ENCODE measurements at regions of chr4 and their contacts with region 1.

Region 1: GRCh38 chr4:56655209-56655626 is 25.9 kb downstream of the HOPX start:
- DNase-seq: peak; percentile 64
- H3K4me3 Mint-ChIP-seq: peak overlapping the region; percentile 95
- H3K27ac Mint-ChIP-seq: peak overlapping the region; percentile 88
- H3K4me1 Mint-ChIP-seq: peaks cover 59% of the 10 kb centered on the region
- H3K27me3 Mint-ChIP-seq: peaks cover 29% of the 10 kb centered on the region

Region 2: DNA sequence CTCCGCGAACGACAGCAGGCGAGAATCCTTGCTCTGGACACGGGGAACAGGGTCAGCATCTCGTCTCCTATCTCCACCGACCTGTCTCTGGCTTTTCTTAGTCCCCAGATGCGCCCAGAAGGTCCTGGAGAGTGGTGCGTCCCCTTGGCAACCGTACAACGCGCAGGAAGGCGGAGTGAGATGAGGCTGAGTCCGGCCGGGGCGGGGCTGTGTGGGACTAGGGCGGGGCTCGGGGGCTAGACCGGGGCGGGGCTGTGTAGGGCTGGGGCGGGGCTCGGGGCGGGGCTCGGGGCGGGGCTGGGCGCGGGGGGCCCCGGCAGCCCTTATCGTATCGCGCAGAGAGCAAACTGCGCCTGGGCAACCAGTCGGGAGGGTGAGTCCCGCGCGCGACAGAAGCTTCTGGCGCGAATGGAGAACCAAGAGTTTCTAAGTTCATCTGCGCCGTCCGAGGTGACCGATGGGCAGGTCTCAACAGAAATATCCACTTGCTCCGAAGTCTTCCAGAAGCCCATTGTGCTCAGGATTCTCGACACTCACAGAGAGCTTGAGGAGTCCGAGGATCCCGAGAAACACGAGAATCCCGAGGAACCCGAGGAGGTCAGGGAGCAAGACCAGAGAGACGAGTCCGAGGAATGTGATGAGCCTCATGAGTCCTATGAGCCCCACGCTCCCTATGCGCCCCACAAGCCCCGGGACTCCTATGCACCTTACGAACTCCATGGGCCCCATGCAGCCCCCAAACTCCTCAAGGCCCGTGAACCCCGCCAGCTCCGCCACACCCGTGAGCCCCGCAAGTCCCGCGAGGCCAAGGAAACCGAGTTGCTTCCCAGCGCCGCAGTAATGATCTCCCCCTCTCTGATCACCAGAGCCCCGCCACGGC is 124.7 kb before region 1 on chr4:
- intact Hi-C with region 1: loop called (anchors 2 kb)
- DNase-seq: peak; percentile 92
- H3K4me3 Mint-ChIP-seq: no peak overlapping the region
- H3K27ac Mint-ChIP-seq: no peak overlapping the region
- H3K4me1 Mint-ChIP-seq: no peaks in the 10 kb centered on the region
- H3K27me3 Mint-ChIP-seq: peaks cover 28% of the 10 kb centered on the region

Region 3: GRCh38 chr4:56641494-56642051 is 13.6 kb before region 1 on chr4:
- intact Hi-C with region 1: loop called (anchors 1 kb)
- DNase-seq: no peak
- H3K4me3 Mint-ChIP-seq: no peak overlapping the region
- H3K27ac Mint-ChIP-seq: peak overlapping the region; percentile 19
- H3K4me1 Mint-ChIP-seq: peaks cover 22% of the 10 kb centered on the region
- H3K27me3 Mint-ChIP-seq: no peaks in the 10 kb centered on the region

Region 4: DNA sequence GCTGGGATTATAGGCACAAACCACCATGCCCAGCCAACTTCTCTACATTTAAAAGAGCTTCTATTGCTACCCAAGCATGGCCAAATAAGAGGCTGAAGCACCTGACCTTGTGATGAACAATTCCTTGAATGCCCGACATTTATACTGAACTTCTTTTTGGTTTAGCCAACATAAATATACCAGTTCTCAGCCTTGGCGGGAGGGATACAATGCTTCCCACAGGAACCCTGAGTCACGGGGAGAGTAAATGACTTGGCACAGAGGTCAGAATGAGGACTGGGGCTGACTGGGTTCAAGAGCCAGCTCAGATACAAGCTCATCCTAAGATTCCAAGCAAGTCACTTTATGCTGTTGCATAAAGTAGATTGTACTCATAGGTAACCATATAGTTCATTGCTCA is 19.8 kb after region 1 on chr4:
- intact Hi-C with region 1: no loop called
- DNase-seq: no peak
- H3K4me3 Mint-ChIP-seq: no peak overlapping the region
- H3K27ac Mint-ChIP-seq: no peak overlapping the region
- H3K4me1 Mint-ChIP-seq: peaks cover 3% of the 10 kb centered on the region
- H3K27me3 Mint-ChIP-seq: peaks cover 38% of the 10 kb centered on the region

Region 5: DNA sequence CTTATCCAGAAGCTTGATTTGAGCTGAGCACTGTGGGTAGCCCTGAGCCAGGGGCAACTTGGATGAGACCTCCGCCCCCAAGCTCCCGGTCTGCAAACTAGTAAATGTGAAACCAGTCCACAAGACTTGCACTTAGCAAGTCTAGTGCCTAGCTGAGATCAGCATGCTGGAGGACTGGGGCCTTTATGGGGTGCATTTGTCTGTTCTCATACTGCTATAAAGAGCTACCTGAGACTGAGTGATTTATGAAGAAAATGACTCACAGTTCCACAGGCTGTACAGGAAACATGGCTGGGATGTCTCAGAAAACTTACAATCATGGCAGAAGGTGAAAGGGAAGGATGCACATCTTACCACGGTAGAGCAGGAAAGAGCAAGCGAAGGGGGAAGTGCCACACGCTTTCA is 68.0 kb after region 1 on chr4:
- intact Hi-C with region 1: loop called (anchors 2 kb)
- DNase-seq: peak; percentile 64
- H3K4me3 Mint-ChIP-seq: peak overlapping the region; percentile 9
- H3K27ac Mint-ChIP-seq: peak overlapping the region; percentile 78
- H3K4me1 Mint-ChIP-seq: peaks cover 16% of the 10 kb centered on the region
- H3K27me3 Mint-ChIP-seq: no peaks in the 10 kb centered on the region

Region 6: GRCh38 chr4:56977321-56978012 is 322.2 kb after region 1 on chr4 and contains the start of gene NOA1:
- intact Hi-C with region 1: loop called (anchors 10 kb)
- DNase-seq: peak; percentile 100
- H3K4me3 Mint-ChIP-seq: peak within 1 kb of the TSS; percentile 98
- H3K27ac Mint-ChIP-seq: peak within 1 kb of the TSS; percentile 98
- H3K4me1 Mint-ChIP-seq: peaks cover 50% of the 10 kb centered on the region
- H3K27me3 Mint-ChIP-seq: peaks cover 2% of the 10 kb centered on the region
- total RNA-seq, gene NOA1: 17.7 and 18.5 TPM in 2 replicates

Measured in activated CD4-positive, alpha-beta T cell treated with anti-CD3 and anti-CD28 coated beads, Interleukin-2, amount 10 ng/mL, durations not matched to agents 24 days and 14 days (primary cell).